ENCODE measurements at regions of chr11 and their contacts with region 1.

Region 1: GRCh38 chr11:61361686-61362541 is at the starts of genes CYB561A3 and TMEM138:
- DNase-seq: peak; percentile 81
- H3K4me3 ChIP-seq: peak within 1 kb of the TSS; percentile 74
- H3K27ac ChIP-seq: peak within 1 kb of the TSS; percentile 100
- H3K27me3 ChIP-seq: no peaks in the 10 kb centered on the region
- CTCF ChIP-seq: no peak
- polyA plus RNA-seq, gene CYB561A3: 34.5 and 43.7 TPM in 2 replicates
- polyA plus RNA-seq, gene TMEM138: 71.7 and 79.2 TPM in 2 replicates

Region 2: GRCh38 chr11:61347916-61348461 is 13.9 kb before region 1 on chr11:
- CTCF ChIA-PET with region 1: no interaction called
- POLR2A ChIA-PET with region 1: interaction called, 19 read pairs
- DNase-seq: no peak
- H3K4me3 ChIP-seq: no peak overlapping the region
- H3K27ac ChIP-seq: no peak overlapping the region
- H3K27me3 ChIP-seq: no peaks in the 10 kb centered on the region
- CTCF ChIP-seq: no peak

Region 3: DNA sequence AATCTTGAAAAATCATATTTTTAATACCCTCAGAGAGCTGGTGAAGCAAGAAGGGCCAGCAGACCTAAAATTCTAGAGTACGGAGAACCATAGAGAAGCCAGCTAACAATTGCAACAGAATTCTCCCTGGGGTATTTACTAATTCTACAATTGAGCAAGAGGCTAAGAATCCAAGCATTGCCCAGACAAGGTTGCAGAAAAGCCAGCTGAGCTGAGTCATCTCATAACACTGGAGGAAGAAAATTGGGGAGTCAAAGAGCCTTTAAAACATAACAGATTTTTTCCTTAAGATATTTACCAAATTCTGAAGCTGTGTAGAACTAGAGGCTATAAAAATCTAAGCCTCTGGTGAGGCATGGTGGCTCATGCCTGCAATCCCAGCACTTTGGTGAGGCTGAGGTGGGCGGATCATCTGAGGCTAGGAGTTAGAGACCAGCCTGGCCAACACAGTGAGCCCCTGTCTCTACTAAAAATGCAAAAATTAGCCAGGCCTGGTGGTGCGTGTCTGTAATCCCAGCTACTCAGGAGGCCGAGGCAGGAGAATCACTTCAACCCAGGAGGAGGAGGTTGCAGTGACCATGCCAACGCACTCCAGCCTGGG is 16.9 kb after region 1 on chr11:
- CTCF ChIA-PET with region 1: interaction called, 5 read pairs
- POLR2A ChIA-PET with region 1: interaction called, 32 read pairs
- DNase-seq: peak; percentile 88
- H3K4me3 ChIP-seq: no peak overlapping the region
- H3K27ac ChIP-seq: peak overlapping the region; percentile 87
- H3K27me3 ChIP-seq: no peaks in the 10 kb centered on the region
- CTCF ChIP-seq: no peak

Region 4: GRCh38 chr11:61516675-61517572 is 155.0 kb after region 1 on chr11:
- CTCF ChIA-PET with region 1: no interaction called
- POLR2A ChIA-PET with region 1: no interaction called
- DNase-seq: no peak
- H3K4me3 ChIP-seq: no peak overlapping the region
- H3K27ac ChIP-seq: no peak overlapping the region
- H3K27me3 ChIP-seq: peaks cover 15% of the 10 kb centered on the region
- CTCF ChIP-seq: peak; percentile 97

Measured in AG04450 (cell line).